Left lung (tissue), 14 donors: ENCODE measurements at regions of chr16 and their contacts with region 1.

Region 1: DNA sequence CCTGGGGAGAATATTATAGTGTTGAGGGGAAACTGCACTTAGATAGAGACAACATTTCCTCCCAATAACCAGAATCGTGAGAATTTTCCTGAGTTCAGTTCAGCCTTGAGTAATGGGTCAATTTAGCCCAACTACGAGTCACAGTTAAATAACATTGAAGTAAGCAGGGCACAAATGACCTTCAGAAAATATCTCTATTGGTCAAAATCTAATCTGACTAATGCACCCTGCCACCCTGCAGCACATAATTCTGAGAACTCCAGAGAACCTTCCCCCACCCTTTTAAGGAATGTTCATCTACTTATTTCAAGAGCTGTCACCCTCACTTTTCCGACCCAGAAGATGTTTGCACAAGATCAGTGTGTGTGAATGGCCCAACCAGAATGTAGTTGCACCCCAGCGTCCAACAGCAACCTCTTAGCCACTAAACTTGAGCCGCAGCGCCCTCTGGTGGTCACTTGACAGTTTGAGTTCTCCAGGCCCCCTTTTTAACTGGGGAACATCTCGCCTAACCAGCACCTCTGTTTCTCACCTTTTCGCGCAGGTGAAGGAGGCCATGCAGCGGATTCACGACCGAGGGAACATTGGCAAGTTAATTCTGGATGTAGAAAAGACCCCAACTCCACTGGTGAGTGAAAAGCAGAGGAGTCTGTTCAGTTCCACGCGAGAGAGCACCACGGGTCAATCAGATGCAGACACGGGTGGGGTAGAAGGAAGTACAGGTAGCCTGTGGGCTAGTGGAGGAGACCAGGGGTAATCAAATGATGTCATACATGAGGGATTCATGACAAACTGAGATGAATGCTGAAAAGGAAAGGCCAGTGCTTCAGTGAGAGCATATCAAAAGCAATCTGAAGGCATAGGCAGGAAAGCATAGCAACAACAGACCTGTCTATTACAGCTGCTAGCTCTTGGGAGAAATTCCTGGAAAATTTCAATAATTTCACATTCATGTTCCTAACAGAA is 50.8 kb upstream of the CLEC3A start:
- DNase-seq: peak; percentile 61 to 91 (median 82)
- ATAC-seq: peak; percentile 99
- H3K4me3 ChIP-seq: no peak overlapping the region
- H3K27ac ChIP-seq: no peak overlapping the region
- H3K4me1 ChIP-seq: no peaks in the 10 kb centered on the region
- H3K27me3 ChIP-seq: peaks cover 0 to 26% of the 10 kb centered on the region in 2 donors
- CTCF ChIP-seq: peak; percentile 64 to 74

Region 2: DNA sequence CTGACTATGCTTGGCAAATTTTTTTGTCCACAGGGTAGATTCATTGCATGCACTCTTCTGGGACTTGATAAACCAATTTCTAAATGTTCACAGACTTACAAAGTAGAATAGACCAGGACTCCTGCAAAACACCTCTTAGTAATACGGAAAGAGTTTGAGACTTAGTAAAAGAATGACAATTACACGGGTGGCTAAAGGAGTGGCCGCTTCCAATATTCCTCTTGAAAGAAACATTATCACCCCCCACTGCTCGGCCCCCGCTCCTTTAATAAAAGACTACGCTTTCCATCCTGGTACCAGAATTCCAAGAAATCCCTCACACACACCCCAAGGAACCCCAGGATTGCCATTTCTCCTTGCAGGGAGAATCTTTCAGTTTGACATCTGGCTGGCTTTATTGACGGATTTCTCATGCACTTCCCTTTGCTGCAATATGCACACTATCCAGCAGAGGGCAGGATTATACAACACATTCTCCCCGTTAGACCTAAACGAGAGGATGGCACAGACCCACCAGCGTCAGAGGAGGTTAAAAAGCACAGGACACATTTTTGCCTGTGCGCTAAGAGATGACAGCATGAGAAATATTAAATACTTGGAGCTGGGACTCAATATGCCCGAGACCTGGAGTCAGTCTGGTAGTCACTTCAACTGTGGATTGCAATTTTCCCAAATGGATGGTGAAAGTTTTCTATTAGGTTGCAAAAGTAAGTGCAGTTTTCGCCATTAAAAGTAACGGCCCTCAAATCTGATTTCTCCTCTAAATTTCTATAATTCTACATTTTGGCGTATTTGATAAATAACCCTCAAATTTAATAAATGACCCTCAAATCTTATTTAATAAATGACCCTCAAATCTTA is 295.9 kb before region 1 on chr16:
- intact Hi-C with region 1: loop called (anchors 5 to 10 kb)
- DNase-seq: peak in 3 of 4 donors; percentile 35 to 83 (median 74)
- ATAC-seq: peak; percentile 98
- H3K4me3 ChIP-seq: no peak overlapping the region
- H3K27ac ChIP-seq: no peak overlapping the region
- H3K4me1 ChIP-seq: peaks cover 0 to 5% of the 10 kb centered on the region in 2 donors
- H3K27me3 ChIP-seq: peaks cover 0 to 3% of the 10 kb centered on the region in 2 donors
- CTCF ChIP-seq: peak; percentile 83 to 88